Activated B cell treated with CpG ODN at 0.5 μM for 24 hours (primary cell): ENCODE measurements at regions of chr9 and their contacts with region 1.

Region 1: DNA sequence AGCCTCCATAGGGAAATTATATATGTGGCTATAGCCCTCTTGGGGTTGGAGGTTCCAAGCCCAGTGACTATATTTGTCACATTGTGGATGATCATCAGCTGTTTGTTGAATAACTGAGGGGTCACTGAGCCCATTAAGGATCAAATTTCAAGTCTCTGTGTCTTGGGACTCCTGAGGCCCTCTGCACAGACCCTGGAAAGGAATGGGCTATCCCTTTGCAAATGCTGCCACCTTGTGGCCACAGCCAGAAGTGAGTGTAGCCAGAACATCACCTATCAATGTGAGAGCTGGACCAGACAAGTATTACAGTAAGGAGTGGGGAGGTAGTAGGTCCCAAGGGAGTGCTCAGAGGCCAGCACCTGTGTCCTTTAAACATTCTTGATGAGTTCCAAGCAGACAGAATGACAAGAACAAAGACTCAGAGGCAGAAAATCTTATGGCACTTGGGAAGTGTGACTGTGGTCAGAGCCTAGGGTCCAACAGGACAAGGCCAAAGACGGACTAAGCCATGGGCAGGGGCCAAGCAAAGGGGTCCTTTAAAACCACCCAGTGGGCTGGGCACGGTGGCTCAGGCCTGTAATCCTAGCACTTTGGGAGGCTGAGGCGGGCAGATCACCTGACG is 8.2 kb downstream of the RPP25L start:
- DNase-seq: peak; percentile 75
- ATAC-seq: peak; percentile 97
- H3K4me3 Mint-ChIP-seq: no peak overlapping the region
- H3K27ac Mint-ChIP-seq: no peak overlapping the region
- H3K4me1 Mint-ChIP-seq: no peaks in the 10 kb centered on the region
- H3K27me3 Mint-ChIP-seq: peaks cover 9% of the 10 kb centered on the region
- CTCF ChIP-seq: peak; percentile 52

Region 2: GRCh38 chr9:33623658-33624586 is 979.8 kb before region 1 on chr9:
- CTCF ChIA-PET with region 1: interaction called, 3 read pairs
- POLR2A ChIA-PET with region 1: no interaction called
- intact Hi-C with region 1: loop called (anchors 5 kb)
- DNase-seq: peak; percentile 45
- ATAC-seq: peak; percentile 92
- H3K4me3 Mint-ChIP-seq: no peak overlapping the region
- H3K27ac Mint-ChIP-seq: no peak overlapping the region
- H3K4me1 Mint-ChIP-seq: peaks cover 4% of the 10 kb centered on the region
- H3K27me3 Mint-ChIP-seq: peaks cover 33% of the 10 kb centered on the region
- CTCF ChIP-seq: no peak

Region 3: GRCh38 chr9:34403554-34404380 is 200.0 kb before region 1 on chr9:
- CTCF ChIA-PET with region 1: interaction called, 11 read pairs
- POLR2A ChIA-PET with region 1: no interaction called
- intact Hi-C with region 1: loop called (anchors 1 kb)
- DNase-seq: no peak
- ATAC-seq: peak; percentile 56
- H3K4me3 Mint-ChIP-seq: no peak overlapping the region
- H3K27ac Mint-ChIP-seq: no peak overlapping the region
- H3K4me1 Mint-ChIP-seq: no peaks in the 10 kb centered on the region
- H3K27me3 Mint-ChIP-seq: no peaks in the 10 kb centered on the region
- CTCF ChIP-seq: peak; percentile 99

Region 4: DNA sequence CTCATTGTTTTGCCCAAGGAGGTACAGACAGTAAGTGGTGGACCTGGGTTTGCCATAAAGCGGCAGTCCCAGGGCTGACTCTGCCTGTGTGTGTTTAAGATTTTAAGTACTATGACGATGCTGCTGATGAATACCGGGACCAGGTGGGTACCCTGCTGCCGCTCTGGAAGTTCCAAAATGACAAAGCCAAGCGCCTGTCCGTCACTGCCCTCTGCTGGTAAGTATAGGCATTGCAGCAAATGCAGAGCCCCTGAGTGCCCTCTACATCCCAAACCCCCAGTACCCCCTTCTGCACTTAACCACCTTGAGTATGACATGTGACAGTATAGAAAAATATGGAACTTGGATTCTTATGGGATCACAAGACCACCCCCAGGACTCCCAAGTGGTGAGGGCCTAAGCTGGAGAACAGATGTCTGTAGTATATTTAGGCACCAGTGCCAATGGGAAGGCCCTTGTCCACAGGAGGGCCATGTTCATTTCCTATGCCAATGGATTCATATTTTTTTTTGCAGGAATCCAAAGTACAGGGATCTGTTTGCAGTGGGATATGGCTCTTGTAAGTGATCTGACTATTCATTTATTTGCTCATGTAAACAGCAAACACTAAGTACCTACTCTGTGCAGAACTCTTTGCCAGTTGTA is 103.0 kb before region 1 on chr9:
- CTCF ChIA-PET with region 1: no interaction called
- POLR2A ChIA-PET with region 1: no interaction called
- intact Hi-C with region 1: loop called (anchors 1 kb)
- DNase-seq: peak; percentile 55
- ATAC-seq: peak; percentile 95
- H3K4me3 Mint-ChIP-seq: no peak overlapping the region
- H3K27ac Mint-ChIP-seq: no peak overlapping the region
- H3K4me1 Mint-ChIP-seq: no peaks in the 10 kb centered on the region
- H3K27me3 Mint-ChIP-seq: peaks cover 13% of the 10 kb centered on the region
- CTCF ChIP-seq: peak; percentile 75

Region 5: DNA sequence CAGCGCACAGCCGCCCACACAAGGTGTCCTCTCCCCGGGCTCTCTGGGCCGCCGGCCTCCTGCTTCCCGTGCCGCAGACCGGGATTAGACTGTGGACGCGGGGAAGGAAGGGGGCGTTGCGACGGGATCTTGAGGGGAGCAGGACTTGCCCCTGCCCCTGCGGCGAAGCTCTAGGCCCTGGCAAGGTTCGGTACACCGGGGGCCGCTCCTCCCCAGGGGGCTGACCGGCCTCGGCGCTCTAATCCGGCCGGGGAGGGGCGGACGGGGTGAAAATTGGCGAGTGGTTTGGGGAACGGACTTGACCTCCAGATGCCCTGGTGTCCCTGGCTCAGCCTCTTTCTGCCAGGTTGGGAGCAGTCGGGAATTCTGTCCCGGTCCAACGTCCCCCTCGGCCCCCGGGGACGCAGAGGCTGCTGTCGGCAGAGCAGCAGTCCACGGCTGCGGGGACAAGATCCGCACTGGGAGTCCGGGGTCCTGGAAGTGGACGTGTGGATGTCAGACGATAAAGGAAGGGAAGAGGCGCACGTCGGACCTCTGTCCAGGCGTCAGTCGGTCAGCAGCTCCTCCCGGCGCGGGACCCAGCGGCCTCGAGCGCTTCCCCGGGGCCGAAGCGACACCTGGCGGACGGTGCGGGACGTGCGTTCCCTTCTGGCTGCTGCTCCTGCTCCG is 12.3 kb before region 1 on chr9:
- CTCF ChIA-PET with region 1: interaction called, 10 read pairs
- POLR2A ChIA-PET with region 1: no interaction called
- intact Hi-C with region 1: no loop called
- DNase-seq: peak; percentile 82
- ATAC-seq: peak; percentile 90
- H3K4me3 Mint-ChIP-seq: peak overlapping the region; percentile 77
- H3K27ac Mint-ChIP-seq: no peak overlapping the region
- H3K4me1 Mint-ChIP-seq: peaks cover 41% of the 10 kb centered on the region
- H3K27me3 Mint-ChIP-seq: peaks cover 77% of the 10 kb centered on the region
- CTCF ChIP-seq: peak; percentile 21

Region 6: GRCh38 chr9:34862043-34862442 is 258.3 kb after region 1 on chr9:
- CTCF ChIA-PET with region 1: no interaction called
- POLR2A ChIA-PET with region 1: no interaction called
- intact Hi-C with region 1: no loop called
- DNase-seq: no peak
- ATAC-seq: no peak
- H3K4me3 Mint-ChIP-seq: no peak overlapping the region
- H3K27ac Mint-ChIP-seq: no peak overlapping the region
- H3K4me1 Mint-ChIP-seq: no peaks in the 10 kb centered on the region
- H3K27me3 Mint-ChIP-seq: peaks cover 36% of the 10 kb centered on the region
- CTCF ChIP-seq: no peak